CD4-positive, alpha-beta T cell (primary cell): ENCODE measurements at regions of chr2 and their contacts with region 1.

Region 1: DNA sequence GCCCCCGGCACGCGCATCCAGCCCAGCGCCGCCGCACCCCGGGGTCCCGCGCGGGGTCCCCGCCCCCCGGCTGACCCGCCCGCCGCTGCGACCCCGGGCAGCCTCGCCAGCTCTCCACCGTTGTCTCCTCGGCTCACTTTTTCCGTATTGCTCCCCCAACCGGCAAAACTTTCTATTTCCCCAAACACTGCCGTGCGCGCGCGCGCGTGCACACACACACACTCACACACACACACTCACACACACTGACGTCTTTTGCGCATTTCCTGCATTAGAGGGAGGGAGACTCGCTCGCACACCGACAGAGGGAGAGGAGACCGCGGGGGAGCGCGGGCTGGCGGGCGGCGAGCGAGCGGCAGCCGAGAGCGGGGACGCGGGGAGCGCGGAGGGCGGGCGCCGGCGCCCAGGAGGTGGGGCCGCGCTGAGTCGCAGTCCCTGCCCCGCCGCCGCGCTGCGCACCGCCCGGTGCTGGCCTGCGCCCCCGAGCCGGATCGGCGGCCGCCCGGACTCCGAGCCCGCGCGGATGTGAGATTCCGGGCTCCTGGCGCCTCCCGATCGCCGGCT is 542 bp upstream of the PRKCE start:
- DNase-seq: peak; percentile 91 to 98 (median 94)
- ATAC-seq: peak; percentile 89
- H3K4me3 ChIP-seq: peak overlapping the region; percentile 97
- H3K4me3 Mint-ChIP-seq: peak overlapping the region; percentile 95
- H3K27ac ChIP-seq: peak overlapping the region; percentile 58 to 62
- H3K27ac Mint-ChIP-seq: peak overlapping the region; percentile 88
- H3K4me1 ChIP-seq: peaks cover 21% of the 10 kb centered on the region
- H3K4me1 Mint-ChIP-seq: peaks cover 37% of the 10 kb centered on the region
- H3K27me3 ChIP-seq: no peaks in the 10 kb centered on the region
- H3K27me3 Mint-ChIP-seq: peaks cover 5% of the 10 kb centered on the region
- CTCF ChIP-seq: peak; percentile 33

Region 2: GRCh38 chr2:45567974-45568789 is 82.8 kb before region 1 on chr2:
- CTCF ChIA-PET with region 1: interaction called, 6 read pairs
- POLR2A ChIA-PET with region 1: interaction called, 10 read pairs
- intact Hi-C with region 1: loop called (anchors 5 kb)
- DNase-seq: peak in 4 of 14 experiments; percentile 7 to 91 (median 86)
- ATAC-seq: peak; percentile 97
- H3K4me3 ChIP-seq: peak overlapping the region; percentile 55
- H3K4me3 Mint-ChIP-seq: peak overlapping the region; percentile 87
- H3K27ac ChIP-seq: peak overlapping the region; percentile 58 to 85
- H3K27ac Mint-ChIP-seq: peak overlapping the region; percentile 87
- H3K4me1 ChIP-seq: peaks cover 12% of the 10 kb centered on the region
- H3K4me1 Mint-ChIP-seq: peaks cover 47% of the 10 kb centered on the region
- H3K27me3 ChIP-seq: no peaks in the 10 kb centered on the region
- H3K27me3 Mint-ChIP-seq: no peaks in the 10 kb centered on the region
- CTCF ChIP-seq: no peak

Region 3: GRCh38 chr2:45611020-45611737 is 39.8 kb before region 1 on chr2 and contains the start of gene SRBD1:
- CTCF ChIA-PET with region 1: no interaction called
- POLR2A ChIA-PET with region 1: interaction called, 20 read pairs
- intact Hi-C with region 1: loop called in 1 of 2 experiments (anchors 2 kb)
- DNase-seq: peak; percentile 61 to 94 (median 78)
- ATAC-seq: peak; percentile 75
- H3K4me3 ChIP-seq: peak within 1 kb of the TSS; percentile 78
- H3K4me3 Mint-ChIP-seq: peak within 1 kb of the TSS; percentile 99
- H3K27ac ChIP-seq: peak within 1 kb of the TSS; percentile 70 to 88
- H3K27ac Mint-ChIP-seq: peak within 1 kb of the TSS; percentile 95
- H3K4me1 ChIP-seq: peaks cover 8% of the 10 kb centered on the region
- H3K4me1 Mint-ChIP-seq: peaks cover 33% of the 10 kb centered on the region
- H3K27me3 ChIP-seq: no peaks in the 10 kb centered on the region
- H3K27me3 Mint-ChIP-seq: no peaks in the 10 kb centered on the region
- CTCF ChIP-seq: no peak
- total RNA-seq, gene SRBD1: 14.2 to 16.0 TPM

Region 4: GRCh38 chr2:45670646-45671045 is 19.7 kb after region 1 on chr2:
- CTCF ChIA-PET with region 1: no interaction called
- POLR2A ChIA-PET with region 1: no interaction called
- intact Hi-C with region 1: no loop called
- DNase-seq: no peak
- ATAC-seq: no peak
- H3K4me3 ChIP-seq: no peak overlapping the region
- H3K4me3 Mint-ChIP-seq: no peak overlapping the region
- H3K27ac ChIP-seq: no peak overlapping the region
- H3K27ac Mint-ChIP-seq: no peak overlapping the region
- H3K4me1 ChIP-seq: no peaks in the 10 kb centered on the region
- H3K4me1 Mint-ChIP-seq: peaks cover 4% of the 10 kb centered on the region
- H3K27me3 ChIP-seq: no peaks in the 10 kb centered on the region
- H3K27me3 Mint-ChIP-seq: no peaks in the 10 kb centered on the region
- CTCF ChIP-seq: no peak

Region 5: DNA sequence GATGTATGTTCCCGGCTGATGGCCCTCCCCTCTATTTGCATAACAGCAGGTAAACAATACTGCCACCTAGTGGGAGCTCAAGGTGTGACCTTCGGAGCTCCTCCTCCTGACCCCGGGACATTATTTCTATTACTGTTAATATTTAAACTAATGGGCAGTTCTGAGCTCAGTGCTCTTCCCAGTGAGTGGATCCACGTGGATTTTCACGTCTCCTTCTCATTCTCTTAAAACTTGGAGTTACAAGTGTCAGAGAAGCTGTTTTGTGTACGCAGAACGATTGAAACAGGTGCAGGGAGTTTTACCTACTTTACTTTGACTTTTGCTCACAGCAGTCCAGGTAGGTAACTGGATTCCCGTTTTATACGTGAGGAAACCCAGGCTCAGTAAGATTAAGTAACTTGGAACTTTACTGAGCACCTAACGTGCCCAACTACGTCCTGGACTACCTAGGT is 127.8 kb after region 1 on chr2:
- CTCF ChIA-PET with region 1: interaction called, 10 read pairs
- POLR2A ChIA-PET with region 1: interaction called, 18 read pairs
- intact Hi-C with region 1: no loop called
- DNase-seq: peak; percentile 43 to 87 (median 64)
- ATAC-seq: peak; percentile 90
- H3K4me3 ChIP-seq: no peak overlapping the region
- H3K4me3 Mint-ChIP-seq: peak overlapping the region; percentile 27
- H3K27ac ChIP-seq: no peak overlapping the region
- H3K27ac Mint-ChIP-seq: no peak overlapping the region
- H3K4me1 ChIP-seq: peaks cover 5% of the 10 kb centered on the region
- H3K4me1 Mint-ChIP-seq: peaks cover 6% of the 10 kb centered on the region
- H3K27me3 ChIP-seq: no peaks in the 10 kb centered on the region
- H3K27me3 Mint-ChIP-seq: no peaks in the 10 kb centered on the region
- CTCF ChIP-seq: peak; percentile 89

Region 6: GRCh38 chr2:46535360-46535759 is 884.4 kb after region 1 on chr2:
- CTCF ChIA-PET with region 1: no interaction called
- POLR2A ChIA-PET with region 1: no interaction called
- intact Hi-C with region 1: loop called in 1 of 2 experiments (anchors 5 kb)
- DNase-seq: peak in 6 of 14 experiments; percentile 11 to 83 (median 46)
- ATAC-seq: peak; percentile 77
- H3K4me3 ChIP-seq: no peak overlapping the region
- H3K4me3 Mint-ChIP-seq: peak overlapping the region; percentile 83
- H3K27ac ChIP-seq: peak overlapping the region in 1 of 2 donors; percentile 15
- H3K27ac Mint-ChIP-seq: peak overlapping the region; percentile 86
- H3K4me1 ChIP-seq: peaks cover 40% of the 10 kb centered on the region
- H3K4me1 Mint-ChIP-seq: peaks cover 56% of the 10 kb centered on the region
- H3K27me3 ChIP-seq: no peaks in the 10 kb centered on the region
- H3K27me3 Mint-ChIP-seq: no peaks in the 10 kb centered on the region
- CTCF ChIP-seq: no peak